T-cell (primary cell): ENCODE measurements at regions of chr18 and their contacts with region 1.

Region 1: DNA sequence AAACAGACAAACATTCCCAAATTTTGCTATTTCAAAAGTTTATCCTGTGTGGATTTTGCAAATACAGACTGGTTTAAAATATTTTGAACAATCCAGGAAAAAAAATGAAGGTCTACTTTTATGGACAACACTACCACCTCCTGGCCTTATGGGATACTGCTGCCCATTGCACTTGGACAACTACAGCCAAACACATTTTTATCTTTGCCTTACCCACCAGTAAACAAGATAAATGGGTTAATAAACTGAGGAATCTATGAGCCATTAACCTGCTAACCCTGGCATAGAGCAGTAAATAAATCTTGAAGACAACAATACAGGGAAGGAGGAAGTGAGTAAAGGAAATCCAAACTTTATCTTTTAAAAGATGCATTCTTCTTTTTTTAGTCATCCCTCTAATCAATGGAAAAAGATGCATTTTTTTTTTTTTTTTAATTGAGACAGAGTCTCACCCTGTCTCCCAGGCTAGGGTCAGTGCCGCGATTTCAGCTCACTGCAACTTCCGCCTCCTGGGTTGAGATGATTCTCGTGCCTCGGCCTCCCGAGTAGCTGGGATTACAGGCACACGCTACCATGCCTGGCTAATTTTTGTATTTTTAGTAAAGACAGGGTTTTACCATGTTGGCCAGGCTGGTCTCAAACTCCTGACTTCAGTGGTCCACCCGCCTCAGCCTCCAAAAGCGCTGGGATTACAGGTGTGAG is 2.1 kb upstream of the SPIRE1 start:
- DNase-seq: peak in 17 of 35 experiments; percentile 6 to 69 (median 28)
- ATAC-seq: peak in 1 of 4 experiments; percentile 30
- H3K4me3 ChIP-seq: no peak overlapping the region
- H3K4me3 Mint-ChIP-seq: peak overlapping the region in 2 of 3 donors; percentile 46 to 81
- H3K27ac ChIP-seq: no peak overlapping the region
- H3K27ac Mint-ChIP-seq: no peak overlapping the region
- H3K4me1 ChIP-seq: peaks cover 2 to 7% of the 10 kb centered on the region in 2 experiments
- H3K4me1 Mint-ChIP-seq: peaks cover 12 to 18% (median 13%) of the 10 kb centered on the region in 3 donors
- H3K27me3 ChIP-seq: peaks cover 0 to 6% of the 10 kb centered on the region in 2 experiments
- H3K27me3 Mint-ChIP-seq: peaks cover 0 to 7% of the 10 kb centered on the region in 2 donors

Region 2: DNA sequence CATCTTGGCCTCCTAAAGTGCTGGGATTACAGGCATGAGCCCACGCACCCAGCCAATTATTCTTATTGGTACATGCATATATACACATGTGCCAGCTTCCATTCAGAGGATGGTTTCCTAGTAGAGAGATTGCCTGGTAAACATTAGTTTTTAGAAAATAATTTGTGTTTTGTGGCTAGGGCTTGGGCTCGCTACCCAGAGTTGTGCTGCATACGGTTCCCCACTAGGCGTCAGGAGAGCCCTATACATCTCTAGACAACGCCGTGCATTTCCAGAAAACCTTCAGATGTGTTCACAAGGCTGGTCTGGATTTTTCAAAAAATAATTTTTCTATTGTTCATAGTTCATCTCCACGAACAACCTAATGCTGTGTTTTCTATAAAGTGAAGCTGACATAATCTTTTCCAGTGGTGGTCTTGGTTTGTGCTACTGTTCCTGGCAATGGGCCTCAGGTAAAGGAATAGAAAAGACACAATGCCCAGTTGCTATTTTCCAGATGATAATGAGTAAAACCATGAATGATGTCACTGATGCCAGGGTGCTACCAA is 268.4 kb before region 1 on chr18:
- CTCF ChIA-PET with region 1: interaction called in 1 of 2 experiments, 20 read pairs
- POLR2A ChIA-PET with region 1: no interaction called
- DNase-seq: peak in 27 of 35 experiments; percentile 19 to 74 (median 38)
- ATAC-seq: peak; percentile 86 to 94 (median 87)
- H3K4me3 ChIP-seq: no peak overlapping the region
- H3K4me3 Mint-ChIP-seq: no peak overlapping the region
- H3K27ac ChIP-seq: no peak overlapping the region
- H3K27ac Mint-ChIP-seq: no peak overlapping the region
- H3K4me1 ChIP-seq: no peaks in the 10 kb centered on the region
- H3K4me1 Mint-ChIP-seq: no peaks in the 10 kb centered on the region
- H3K27me3 ChIP-seq: peaks cover 0 to 23% of the 10 kb centered on the region in 2 experiments
- H3K27me3 Mint-ChIP-seq: peaks cover 9 to 12% of the 10 kb centered on the region in 2 donors